Sciatic nerve (tissue), 2 donors: ENCODE measurements at regions of chr7 and their contacts with region 1.

Region 1: DNA sequence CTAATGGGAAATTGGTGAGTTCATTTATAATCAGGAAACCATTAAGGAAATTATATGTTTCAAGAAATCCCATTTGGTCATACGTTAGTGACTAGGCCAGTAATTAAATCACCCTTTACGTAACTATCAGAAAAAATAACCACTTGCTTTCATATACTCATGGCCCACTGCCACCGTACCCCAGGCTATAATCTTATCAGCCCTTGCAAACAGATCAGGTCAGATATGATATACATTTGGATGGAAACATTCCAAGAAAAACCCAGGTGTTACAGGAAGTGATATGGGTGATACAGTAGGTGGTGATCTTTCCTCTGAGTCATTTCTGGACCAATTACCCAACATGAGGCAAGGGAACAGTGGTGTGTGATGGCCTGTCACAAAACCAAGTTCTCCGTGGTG is 481.0 kb upstream of the SEMA3A start:
- DNase-seq: no peak
- ATAC-seq: no peak

Region 2: DNA sequence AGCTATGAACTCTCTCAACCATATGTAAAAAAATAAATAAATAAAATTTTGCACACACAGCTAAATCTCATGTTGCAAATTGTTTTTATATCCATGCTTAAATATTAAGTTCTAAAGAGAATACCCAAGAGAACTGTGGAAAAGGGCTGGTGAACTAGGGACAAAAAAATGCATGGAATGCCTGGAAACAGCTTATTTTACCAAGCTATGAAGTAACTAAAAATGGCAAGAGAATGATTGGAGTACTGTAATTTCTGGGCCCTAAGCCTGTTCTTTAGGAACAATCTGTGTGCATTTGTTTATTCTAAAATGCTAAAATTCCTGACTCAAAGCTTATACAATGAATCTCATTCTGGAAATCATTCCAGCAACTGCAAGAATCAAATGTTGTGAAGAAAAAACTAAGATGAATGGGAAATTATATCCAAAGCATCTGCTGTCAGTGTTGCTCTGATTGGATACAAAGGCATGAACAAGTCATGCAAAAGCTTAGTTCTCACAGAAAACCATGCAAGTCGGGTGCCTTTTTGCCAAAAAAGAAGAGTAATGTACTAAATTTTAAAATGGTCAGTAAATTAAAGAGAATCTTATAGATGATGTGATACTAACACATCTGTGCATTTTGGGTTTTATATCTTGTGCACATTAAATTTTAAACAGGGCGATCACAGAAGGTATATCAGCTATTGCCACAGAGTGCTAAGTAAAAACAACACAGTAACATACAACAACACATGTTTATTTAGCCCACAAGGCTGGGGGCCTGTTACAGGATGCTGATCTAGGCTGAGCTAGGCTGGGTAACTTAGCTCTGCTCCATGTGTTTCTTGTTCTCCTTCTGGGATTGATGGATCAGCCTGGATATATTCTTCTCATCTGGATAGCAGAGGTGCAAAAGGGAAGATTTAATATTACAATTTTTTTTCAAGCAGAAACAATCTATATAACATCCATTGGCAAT is 27.6 kb before region 1 on chr7:
- intact Hi-C with region 1: loop called (anchors 2 kb)
- DNase-seq: no peak
- ATAC-seq: peak; percentile 48